ENCODE measurements at regions of chr6 and their contacts with region 1.

Region 1: DNA sequence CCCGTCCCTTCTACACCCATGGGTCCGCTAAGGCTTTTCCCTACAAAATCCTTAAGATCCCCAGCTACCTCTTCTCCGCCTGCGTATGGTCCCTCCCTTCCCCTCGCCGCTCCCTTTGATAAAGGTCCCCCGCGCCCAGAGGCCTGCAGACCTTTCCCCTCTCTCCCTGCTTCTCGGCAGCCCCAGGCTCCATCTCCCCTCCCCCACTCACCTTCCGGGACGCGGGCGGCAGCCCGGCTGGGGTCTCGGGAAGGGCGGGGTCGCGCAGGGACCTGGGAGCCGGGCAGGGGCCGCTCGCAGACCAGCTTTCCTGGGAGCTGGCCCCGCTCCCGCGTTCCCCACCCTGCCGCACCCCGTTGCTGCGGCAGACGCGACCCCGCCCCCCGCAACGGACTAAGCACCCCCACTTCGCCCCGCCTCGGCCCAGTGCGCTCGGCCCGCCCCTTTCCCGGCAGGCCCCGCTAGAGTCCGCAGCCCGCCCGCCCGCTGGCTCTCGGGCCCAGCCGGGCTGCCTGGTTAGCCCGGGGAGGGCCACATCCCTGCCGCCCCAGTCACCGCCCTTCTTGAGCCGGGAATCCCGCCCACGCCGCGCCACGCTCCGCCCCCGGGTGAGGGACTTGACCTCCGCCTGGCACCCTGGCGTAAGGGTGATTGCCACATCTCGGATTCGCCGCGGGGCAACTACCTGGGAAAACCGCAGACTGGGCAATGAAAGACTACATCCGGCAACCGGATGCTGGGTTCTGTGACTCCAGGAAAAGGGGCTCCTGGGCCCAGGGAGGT is at the start of gene FLOT1:
- DNase-seq: peak; percentile 99
- ATAC-seq: peak; percentile 76
- total RNA-seq, gene FLOT1: 130 to 137 TPM

Region 2: DNA sequence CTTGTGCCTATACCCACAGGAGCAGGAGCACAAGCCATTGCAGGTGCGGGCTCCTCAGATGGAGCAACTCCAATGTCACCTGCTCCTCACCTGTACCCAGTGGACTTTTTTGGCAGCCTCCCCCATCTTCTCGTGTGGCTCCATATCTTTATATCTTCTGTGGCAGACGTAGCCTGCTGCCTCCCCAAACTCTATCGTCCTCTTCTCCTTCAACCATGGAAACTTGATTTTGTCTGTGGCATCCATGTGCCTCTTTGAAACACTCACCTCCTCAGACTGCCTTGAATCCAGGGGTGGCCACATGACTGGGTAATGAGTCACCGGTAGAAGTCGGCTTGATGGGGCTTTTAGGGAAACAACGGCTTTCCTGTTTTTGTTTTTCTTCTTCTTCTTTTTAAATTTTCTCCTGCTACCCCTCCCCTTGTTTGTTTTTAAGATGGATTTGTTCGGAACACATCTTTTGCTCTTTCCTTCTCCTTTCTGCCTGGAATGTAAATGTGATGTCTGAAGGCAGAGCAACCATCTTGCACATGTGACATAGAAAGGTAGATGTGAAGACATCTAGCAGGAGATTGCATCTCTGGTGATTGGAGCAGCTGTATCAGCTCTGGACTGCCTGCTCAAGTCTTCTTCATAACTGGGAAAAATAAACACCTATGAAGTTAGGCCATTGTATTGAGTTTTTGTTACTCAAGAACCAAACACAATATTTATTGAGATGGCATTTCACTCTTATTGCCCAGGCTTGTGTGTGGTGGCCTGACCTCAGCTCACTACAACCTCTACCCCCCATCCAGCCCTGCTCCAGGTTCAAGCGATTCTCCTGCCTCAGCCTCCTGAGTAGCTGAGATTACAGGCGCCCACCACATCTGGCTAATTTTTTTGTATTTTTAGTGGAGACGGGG is 71.9 kb after region 1 on chr6:
- intact Hi-C with region 1: no loop called
- DNase-seq: no peak
- ATAC-seq: no peak

Region 3: DNA sequence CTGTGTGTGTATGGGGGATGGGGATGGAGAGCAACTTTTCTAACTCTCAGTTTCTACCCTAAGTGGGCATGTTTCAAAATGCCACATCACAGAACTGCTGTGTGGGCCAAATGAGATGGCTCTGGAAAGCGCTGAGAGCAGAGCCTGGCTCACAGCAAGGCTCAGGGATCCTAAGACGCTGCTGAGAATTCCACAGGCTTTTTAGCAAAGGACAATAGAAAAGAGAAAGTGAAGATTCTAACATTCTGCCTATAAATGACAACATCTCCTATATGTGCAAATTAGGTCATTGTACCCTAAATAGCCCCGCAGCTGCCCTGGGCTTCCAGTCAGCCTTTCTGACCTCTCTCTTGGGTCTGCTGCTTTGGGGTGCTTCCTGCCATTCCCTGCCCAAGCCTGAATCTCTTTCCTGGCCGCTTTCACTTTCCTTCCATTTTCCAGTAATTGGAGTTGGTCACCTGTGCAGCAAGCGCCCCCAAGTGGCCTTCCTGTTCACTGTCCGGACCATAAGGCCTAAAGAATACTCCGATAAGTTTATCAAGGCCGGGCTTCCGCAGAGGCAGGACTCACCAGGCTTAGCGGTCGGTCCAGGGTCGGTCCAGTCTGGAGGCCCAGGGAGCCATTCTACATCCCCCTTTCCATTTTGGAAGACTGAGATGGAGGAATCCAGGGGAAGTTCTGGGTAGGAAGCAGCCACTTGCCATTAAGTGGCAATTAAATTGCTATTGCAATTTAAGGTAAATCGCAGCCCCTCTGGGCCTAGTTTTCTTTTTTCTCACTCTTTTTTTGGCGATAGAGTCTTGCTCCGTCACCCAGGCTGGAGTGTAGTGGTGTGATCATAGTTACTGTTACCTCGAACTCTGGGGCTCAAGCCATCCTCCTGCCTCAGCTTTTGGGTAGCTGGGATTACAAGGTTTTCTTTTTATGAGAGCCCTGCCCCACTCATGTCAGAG is 135.2 kb after region 1 on chr6:
- intact Hi-C with region 1: loop called in 1 of 2 experiments (anchors 5 kb)
- DNase-seq: peak; percentile 89 to 94
- ATAC-seq: peak; percentile 79

Measured in left colon (tissue), 2 donors.